ENCODE measurements at regions of chr1 and their contacts with region 1.

Region 1: DNA sequence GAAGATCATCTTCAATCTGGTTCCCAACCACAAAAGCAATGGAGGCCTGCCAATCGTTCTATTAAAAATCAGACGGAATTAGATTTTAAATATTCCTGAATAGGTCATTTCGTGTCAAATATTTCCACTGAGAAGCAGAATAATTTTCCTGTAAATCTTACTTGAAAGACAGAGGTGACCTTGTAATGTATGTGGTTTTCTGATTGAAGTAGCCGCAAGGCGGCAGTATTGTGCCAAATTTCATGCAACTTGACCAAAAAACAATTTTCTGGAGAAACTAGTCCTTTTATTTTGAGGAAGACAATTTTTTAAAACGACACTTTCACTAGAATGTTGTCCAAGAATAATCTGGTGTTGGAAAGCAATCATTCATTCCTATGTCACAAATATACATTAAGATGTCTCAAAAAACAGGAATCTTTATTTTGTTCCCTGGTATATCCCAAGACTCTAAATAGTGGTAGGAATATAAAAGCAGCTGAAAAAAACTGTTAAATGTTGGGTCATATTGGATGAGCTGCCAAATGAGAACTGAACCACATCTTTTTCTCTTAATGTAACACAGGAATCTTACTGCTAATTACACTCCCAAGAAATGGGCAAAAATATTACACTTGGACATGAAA is 33.6 kb downstream of the SPAG17 start:
- DNase-seq: peak; percentile 79
- ATAC-seq: no peak
- H3K4me3 ChIP-seq: no peak overlapping the region
- H3K27ac ChIP-seq: no peak overlapping the region
- H3K4me1 ChIP-seq: peaks cover 17% of the 10 kb centered on the region; the same call in 1 of the 2 replicates
- H3K27me3 ChIP-seq: no peaks in the 10 kb centered on the region
- CTCF ChIP-seq: peak; percentile 90

Region 2: DNA sequence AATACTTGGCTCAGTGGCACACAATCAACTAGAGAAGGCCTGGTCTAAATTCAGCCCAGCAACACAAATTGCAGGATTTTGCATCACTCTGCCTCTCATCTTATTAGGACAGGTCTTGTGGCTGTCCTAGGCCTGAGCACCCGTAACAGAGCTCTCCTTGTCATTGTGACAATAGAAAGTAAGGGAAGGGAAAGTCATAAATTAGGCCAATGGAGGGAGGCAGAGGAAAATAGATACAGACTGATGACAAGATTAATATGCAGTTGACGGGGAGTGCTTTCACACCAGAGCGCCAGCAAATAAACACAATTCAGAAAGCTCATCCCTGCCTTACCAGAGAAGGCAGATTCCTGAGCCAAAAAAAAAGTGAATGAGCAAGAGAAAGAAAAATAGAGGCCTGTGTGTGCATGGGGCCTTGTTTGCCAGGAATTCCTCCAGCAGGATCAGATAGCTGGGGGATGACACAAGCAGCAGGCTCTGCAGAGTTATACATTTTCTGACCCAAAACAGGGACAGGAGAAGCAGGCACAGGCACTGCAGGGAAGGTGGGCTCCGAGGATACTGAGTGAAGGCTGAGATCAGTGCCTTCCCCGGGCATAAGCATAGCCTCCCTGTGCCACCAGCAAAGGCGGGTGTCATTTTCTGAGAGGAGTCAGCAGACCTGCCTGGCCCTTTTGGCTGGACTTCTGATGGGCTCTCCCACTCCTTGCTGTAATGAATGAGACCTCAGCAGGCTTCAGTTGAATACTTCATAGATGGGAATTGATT is 143.6 kb after region 1 on chr1:
- CTCF ChIA-PET with region 1: no interaction called
- POLR2A ChIA-PET with region 1: no interaction called
- intact Hi-C with region 1: loop called (anchors 5 kb)
- DNase-seq: no peak
- ATAC-seq: no peak
- H3K4me3 ChIP-seq: no peak overlapping the region
- H3K27ac ChIP-seq: no peak overlapping the region
- H3K4me1 ChIP-seq: no peaks in the 10 kb centered on the region
- H3K27me3 ChIP-seq: peaks cover 31% of the 10 kb centered on the region
- CTCF ChIP-seq: no peak

Region 3: DNA sequence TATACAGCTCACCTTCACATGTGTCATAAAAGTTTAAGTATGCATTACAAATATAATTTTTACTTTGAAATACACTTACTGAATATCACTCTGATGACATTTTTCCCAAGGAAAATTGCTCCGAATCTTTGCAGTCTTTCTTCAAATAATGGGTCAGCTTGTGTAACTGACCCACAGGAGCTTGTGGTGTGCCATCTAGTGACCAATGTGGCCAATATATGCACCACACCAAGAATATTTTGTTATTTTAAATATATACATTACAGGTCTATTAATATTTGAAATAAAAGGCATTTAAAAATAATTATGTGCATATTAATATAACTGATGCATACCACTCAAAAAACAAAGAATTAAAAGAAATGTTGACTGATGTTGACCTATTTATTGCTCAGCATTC is 565.4 kb after region 1 on chr1:
- CTCF ChIA-PET with region 1: no interaction called
- POLR2A ChIA-PET with region 1: no interaction called
- intact Hi-C with region 1: loop called (anchors 2 kb)
- DNase-seq: peak; percentile 21
- ATAC-seq: no peak
- H3K4me3 ChIP-seq: no peak overlapping the region
- H3K27ac ChIP-seq: no peak overlapping the region
- H3K4me1 ChIP-seq: no peaks in the 10 kb centered on the region
- H3K27me3 ChIP-seq: peaks cover 7% of the 10 kb centered on the region; the same call in 1 of the 2 replicates
- CTCF ChIP-seq: peak; percentile 44